Activated naive CD4-positive, alpha-beta T cell treated with anti-CD3 and anti-CD28 coated beads, Interleukin-2, amount 10 ng/mL, durations not matched to agents 7 days and 5 days (primary cell): ENCODE measurements at regions of chr5 and their contacts with region 1.

Region 1: DNA sequence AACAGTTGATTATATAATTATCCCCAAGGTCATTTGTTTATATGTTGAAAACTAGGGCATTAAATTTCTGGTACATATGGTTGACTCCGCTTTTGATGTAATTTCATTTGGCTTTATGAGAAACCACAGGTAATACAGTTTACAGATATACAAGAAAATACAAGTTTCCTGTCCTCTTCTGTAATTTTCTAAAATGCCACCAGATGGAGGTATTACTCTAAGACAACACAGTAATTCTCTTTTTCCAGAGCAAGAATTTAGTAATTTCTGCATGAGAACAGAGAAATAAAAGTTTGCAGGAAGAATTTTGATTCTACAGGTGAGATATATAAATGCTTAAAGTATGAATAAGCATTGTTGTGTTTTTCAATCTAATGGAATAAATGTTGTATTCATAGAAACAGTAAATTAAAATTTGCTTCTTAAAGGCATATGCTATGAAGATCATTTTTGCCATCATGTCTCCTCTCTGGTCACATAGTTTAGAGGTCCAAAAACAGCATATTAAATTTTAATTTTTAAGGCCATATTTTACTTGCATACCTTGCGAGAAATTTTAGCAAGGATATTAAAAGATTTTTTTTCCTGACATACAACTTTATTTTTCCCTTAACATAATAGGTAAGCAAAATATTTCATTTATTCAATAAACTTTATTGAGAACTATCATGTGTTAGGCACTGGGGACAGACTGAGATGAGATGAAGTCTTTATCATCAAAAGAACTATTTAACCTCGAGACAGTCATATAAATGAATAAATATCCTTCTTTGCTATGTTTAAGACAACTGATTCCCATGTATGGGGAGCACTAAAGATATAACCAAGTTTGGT is 22.7 kb downstream of the CHD1 start:
- DNase-seq: no peak
- H3K4me3 Mint-ChIP-seq: no peak overlapping the region
- H3K27ac Mint-ChIP-seq: no peak overlapping the region
- H3K4me1 Mint-ChIP-seq: peaks cover 18% of the 10 kb centered on the region
- H3K27me3 Mint-ChIP-seq: no peaks in the 10 kb centered on the region

Region 2: DNA sequence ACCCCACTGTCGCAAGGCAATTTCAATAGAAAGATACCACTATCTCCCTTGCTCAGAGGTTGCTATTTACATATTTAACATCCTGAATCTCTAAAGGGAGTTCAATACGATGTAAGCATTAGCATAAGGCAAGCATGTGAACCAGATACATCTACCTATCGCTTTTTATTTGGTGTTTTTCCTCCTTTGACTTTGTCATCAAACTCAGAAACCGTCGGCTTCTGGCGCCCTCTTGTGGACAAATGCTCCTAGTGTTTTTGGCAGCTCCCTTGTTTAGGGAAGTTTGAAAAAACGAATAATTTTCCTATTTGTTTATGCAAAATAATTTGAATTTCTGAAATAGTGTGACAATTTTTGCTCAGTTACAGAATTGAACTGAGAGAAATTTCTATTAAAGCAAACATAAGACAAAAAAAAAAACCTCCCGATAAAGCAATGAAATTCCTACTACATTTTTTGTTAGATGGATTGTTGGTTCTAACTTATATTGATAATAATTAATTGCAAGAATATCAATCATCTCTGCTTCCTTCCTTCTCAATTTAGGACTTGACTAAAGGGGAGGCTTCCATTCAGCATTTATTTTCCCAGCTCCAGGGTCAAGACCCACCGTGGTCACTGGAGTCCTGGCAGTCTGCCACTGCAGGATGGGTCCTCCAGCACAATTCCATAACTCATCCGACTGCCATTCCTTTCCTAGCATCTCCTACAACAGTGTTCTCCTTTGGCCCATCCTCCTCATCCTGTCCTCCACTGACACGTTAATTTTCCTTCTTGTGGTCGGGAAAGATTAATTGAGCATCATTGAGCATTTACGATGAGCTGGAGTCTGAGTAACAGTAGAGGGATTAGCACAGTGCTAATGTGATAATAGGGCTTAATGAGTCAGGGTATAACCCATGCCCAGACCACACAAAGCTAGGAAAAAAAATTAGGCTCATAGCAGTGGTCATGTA is 154.5 kb after region 1 on chr5:
- CTCF ChIA-PET with region 1: interaction called, 33 read pairs
- DNase-seq: peak; percentile 90
- H3K4me3 Mint-ChIP-seq: no peak overlapping the region
- H3K27ac Mint-ChIP-seq: no peak overlapping the region
- H3K4me1 Mint-ChIP-seq: peaks cover 4% of the 10 kb centered on the region
- H3K27me3 Mint-ChIP-seq: peaks cover 17% of the 10 kb centered on the region